Posterior cingulate gyrus (tissue), 11 donors: ENCODE measurements at regions of chr14 and their contacts with region 1.

Region 1: DNA sequence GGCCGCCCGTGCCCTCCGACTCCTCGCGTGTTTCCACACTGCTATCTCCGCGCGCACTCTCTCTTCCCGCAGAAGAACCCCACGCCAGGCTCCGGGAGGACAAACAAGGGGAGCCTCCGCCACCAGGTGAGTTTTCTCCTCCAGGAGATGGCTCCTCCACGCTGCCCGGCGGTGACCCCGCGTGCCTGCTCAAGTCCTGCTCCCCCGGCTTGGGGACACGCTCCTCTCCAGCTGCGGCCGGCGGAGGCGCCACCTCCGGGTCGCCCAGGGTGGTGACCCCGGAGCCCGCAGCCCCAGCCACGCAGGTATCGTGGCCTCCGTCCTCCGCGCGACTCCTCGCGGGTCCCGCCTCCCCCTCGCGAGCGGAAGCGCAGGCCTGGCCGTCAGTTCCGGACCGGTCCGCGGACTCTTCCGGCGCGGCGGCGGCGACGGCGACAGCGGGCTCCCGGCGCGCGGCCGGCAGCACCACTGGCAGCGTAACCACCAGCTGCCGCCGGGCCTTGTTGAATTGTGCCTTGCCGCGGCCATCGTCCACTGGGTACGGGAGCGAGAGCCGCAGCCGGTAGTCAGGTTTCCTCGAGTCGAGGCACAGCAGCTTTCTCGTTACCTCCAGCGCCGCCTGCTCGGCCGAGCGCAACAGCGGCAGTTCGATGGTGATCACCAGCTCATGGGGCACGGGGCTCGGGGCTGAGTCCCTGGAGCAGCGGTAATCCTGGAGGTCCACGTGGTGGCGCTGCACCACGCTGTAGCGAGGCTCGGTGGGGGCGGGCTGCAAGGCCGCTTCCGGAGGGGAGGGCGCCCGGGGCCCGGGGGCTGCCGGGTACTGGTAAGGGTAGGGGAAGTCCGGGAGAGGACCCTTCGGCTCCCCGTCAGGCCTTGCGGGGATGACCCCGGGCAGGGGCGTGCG is 1.2 kb downstream of the DNAAF2 start:
- DNase-seq: peak; percentile 87 to 99 (median 94)

Region 2: DNA sequence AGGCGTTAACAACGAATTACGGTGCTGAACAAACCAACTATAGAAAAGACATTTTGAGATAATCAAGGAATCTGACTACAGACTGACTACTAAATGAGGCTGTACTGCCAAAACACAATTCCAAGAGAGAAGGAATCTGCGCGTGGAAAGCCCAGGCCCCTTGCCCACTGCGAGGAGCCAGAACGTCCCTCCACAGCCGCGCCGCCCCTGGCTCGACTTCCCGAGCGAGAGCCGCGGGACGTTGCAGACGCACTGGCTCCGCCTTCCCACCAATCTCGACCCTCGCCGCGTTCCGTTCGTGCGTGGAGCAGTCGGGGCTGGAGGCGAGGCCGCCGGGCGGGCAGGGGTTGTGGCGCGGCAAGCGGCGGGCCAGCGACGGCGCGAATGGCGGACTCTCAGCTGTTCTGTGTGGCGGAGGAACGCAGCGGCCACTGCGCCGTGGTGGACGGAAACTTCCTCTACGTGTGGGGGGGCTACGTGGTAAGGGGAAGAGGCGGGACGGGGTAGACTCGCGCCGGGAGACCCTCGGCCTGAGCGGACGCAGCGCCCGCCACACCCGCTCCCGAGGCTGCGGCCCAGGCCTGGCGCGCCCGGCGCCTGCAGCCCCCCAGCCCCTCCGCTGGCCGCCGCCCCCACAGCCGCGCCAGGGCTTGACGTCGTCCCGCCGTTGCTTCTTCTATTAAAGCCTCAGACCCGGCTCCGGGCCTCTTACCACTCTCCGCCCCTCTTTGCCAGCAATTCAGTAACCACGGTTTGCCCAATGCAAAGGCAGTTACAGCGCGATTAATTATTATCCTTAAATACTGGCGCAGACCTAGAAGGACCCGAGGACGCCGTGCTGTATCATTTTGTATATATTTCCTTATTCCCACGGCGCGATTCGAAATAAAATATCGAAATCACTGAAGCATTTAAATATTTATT is 59.2 kb after region 1 on chr14 and contains the start of gene KLHDC1:
- intact Hi-C with region 1: loop called (anchors 1 kb)
- DNase-seq: peak; percentile 82 to 98 (median 90)

Region 3: DNA sequence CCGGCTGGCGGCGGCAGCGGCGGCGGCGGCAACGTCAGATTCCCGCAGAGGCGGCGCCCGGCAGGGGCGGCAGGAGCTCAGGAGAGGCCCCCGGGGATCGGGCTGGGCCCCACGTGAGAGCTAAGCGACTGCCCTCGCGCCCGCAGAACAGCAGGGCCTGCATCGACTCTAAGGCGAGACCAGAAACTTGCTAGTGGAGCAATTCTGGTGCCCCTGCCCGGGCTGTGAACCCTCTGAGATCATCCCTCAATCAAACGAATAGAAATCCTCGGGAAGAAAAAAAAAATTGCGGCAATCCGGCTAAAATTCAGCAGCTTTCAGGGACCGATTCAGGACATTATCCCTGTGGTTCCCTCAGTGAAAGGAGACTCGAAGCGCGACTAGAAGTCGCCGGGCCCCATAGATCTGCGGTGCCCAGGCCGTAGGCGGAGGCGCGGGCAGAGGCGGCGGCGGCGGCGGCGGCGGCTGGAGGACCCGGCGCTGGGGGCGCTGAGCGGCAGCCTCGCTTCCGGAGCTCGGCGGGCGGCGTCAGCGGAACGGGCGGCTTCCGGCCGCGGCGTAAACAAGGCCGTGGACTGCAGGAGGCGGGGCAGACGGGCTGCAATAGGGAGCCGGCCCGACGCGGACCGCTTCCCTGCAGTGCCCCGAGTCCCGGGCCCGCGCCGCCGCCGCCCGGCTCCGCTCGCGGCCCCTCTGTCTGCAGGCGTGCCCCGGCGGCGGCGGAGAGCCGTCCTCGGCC is 133.8 kb after region 1 on chr14 and contains the start of gene KLHDC2:
- intact Hi-C with region 1: loop called (anchors 1 kb)
- DNase-seq: peak; percentile 80 to 98 (median 88)

Region 4: DNA sequence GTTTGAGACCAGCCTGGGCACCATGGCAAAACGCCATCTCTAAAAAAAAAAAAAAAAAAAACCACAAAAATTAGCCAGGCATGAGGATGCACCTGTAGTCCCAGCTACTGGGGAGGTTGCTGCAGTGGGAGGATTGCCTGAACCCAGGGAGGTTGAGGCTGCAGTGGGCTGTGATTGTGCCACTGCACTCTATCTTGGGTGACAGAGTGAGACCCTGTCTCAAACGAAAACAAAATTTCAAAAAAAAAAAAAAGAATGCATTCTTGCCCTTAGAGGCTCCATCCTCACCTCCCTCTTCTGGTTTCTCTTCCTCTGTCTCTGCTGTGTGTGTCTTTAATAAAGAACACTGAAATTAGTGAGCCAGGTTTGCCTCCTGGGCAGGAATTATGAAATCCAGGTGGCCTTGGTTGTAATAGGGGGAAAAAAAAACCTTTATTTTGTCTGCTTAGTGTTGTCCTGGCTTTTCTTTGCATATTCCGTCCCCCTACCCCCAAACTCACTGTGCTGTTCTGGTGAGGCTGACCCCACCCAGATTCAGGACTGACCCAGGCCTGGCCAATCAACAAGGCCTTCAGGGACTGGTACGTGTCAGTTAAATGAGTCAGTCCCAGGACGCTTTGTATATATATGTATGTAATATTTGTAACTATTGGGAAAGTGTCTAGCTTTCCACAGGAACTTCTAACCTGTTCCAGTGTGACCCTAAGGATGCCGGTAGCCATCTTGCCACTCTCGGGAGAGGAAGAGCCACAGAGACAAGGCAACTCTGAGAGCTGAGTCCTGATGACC is 374.9 kb after region 1 on chr14:
- intact Hi-C with region 1: no loop called
- DNase-seq: no peak